Dorsolateral prefrontal cortex (tissue), 120 donors: ENCODE measurements at regions of chr15 and their contacts with region 1.

Region 1: DNA sequence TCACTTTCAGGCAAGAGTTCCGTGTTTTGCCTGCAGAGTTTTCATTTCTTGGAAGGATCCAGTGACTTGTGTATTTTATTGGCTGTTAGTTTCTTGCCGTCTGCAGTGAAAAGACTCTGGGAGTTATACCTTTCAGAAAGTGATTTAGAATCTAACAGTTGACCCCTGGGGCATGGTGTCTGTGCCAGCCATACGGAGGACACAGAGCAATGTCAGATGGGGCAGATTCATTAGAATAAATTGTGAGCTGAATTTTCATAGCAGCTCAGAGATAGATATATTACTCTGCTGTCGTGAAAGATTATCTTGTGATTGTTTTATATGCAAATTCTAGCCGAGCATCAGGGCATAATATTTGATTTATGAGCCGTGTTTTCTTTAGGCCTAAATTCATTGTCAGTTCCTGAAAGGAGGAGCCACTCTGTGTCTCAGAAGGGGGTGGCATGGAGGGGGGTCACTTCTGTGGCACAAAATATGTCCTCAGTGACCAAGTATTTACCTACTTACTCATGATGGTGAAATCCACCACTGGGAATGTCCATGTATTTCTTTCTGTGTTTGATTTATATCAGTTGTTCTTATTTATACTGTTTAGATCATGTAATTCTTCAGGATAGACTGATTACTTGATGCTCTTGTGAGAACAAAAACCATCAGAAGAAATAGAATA is 131.8 kb downstream of the SV2B start:
- DNase-seq: no peak
- H3K4me3 ChIP-seq: no peak overlapping the region
- H3K27ac ChIP-seq: peak overlapping the region in 1 of 59 donors; percentile 89
- H3K27me3 ChIP-seq: peaks cover 0 to under 1% (median 0%) of the 10 kb centered on the region in 45 donors
- CTCF ChIP-seq: no peak

Region 2: DNA sequence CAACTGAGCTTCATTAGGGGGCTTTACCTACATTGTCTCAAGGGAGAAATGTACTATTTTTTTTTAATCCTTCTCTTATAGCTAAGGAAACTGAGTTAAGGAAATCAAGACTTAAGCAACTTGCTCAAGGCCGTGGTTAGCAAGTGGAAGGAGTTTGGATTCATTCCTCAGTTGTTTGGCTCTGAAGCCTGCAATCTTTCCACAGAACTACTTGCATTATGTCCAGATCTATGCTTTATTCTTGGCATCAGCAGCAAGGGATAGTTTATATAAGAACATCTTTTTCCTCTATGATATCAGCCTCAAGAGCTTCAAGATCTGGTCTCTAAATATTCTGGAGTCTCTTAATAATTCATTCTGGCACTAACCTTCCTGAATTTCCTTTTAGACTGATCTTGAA is 50.6 kb after region 1 on chr15:
- intact Hi-C with region 1: loop called in 1 of 2 experiments (anchors 5 kb)
- DNase-seq: no peak
- H3K4me3 ChIP-seq: no peak overlapping the region
- H3K27ac ChIP-seq: peak overlapping the region in 29 of 59 donors; percentile 2 to 81 (median 52)
- H3K27me3 ChIP-seq: no peaks in the 10 kb centered on the region
- CTCF ChIP-seq: no peak